HepG2 (cell line): ENCODE measurements at regions of chr1 and their contacts with region 1.

Region 1: GRCh38 chr1:113389953-113390834 is at the start of gene MAGI3:
- DNase-seq: peak; percentile 96
- ATAC-seq: peak; percentile 90
- H3K4me3 ChIP-seq: peak within 1 kb of the TSS; percentile 76 to 89 (median 77)
- H3K27ac ChIP-seq: peak within 1 kb of the TSS; percentile 86
- H3K4me1 ChIP-seq: peaks cover 38% of the 10 kb centered on the region
- H3K27me3 ChIP-seq: no peaks in the 10 kb centered on the region; a peak in 1 of 5 replicates
- CTCF ChIP-seq: peak; percentile 29; the same call in 1 of the 2 replicates
- EP300 ChIP-seq: no peak
- POLR2A ChIP-seq: peak; percentile 85 to 92
- RAD21 ChIP-seq: peak; percentile 42
- total RNA-seq, gene MAGI3: 11.3 and 11.8 TPM in 2 replicates

Region 2: GRCh38 chr1:113140588-113141446 is 249.4 kb before region 1 on chr1:
- CTCF ChIA-PET with region 1: no interaction called
- POLR2A ChIA-PET with region 1: interaction called, 4 read pairs
- in situ Hi-C with region 1: loop called (anchors 10 kb)
- intact Hi-C with region 1: loop called (anchors 2 kb)
- DNase-seq: peak; percentile 68
- ATAC-seq: peak; percentile 94
- H3K4me3 ChIP-seq: peak overlapping the region; percentile 55 to 78 (median 56)
- H3K27ac ChIP-seq: peak overlapping the region; percentile 16
- H3K4me1 ChIP-seq: peaks cover 19% of the 10 kb centered on the region
- H3K27me3 ChIP-seq: no peaks in the 10 kb centered on the region
- CTCF ChIP-seq: peak; percentile 93
- EP300 ChIP-seq: no peak
- POLR2A ChIP-seq: no peak
- RAD21 ChIP-seq: peak; percentile 91

Region 3: GRCh38 chr1:113146242-113147072 is 243.7 kb before region 1 on chr1:
- CTCF ChIA-PET with region 1: no interaction called
- POLR2A ChIA-PET with region 1: interaction called, 4 read pairs
- in situ Hi-C with region 1: loop called (anchors 10 kb)
- intact Hi-C with region 1: loop called (anchors 2 kb)
- DNase-seq: peak; percentile 87
- ATAC-seq: peak; percentile 87
- H3K4me3 ChIP-seq: peak overlapping the region; percentile 33 to 64 (median 44)
- H3K27ac ChIP-seq: peak overlapping the region; percentile 81
- H3K4me1 ChIP-seq: peaks cover 37% of the 10 kb centered on the region
- H3K27me3 ChIP-seq: no peaks in the 10 kb centered on the region
- CTCF ChIP-seq: no peak
- EP300 ChIP-seq: peak in 1 of 2 experiments; percentile 64; a peak in 1 of 4 replicates
- POLR2A ChIP-seq: peak in 1 of 2 experiments; percentile 41; a peak in 1 of 4 replicates
- RAD21 ChIP-seq: no peak

Region 4: GRCh38 chr1:113291777-113292602 is 98.2 kb before region 1 on chr1:
- CTCF ChIA-PET with region 1: no interaction called
- POLR2A ChIA-PET with region 1: no interaction called
- in situ Hi-C with region 1: no loop called
- intact Hi-C with region 1: loop called (anchors 1 kb)
- DNase-seq: peak; percentile 7
- ATAC-seq: no peak; the same call in 2 of the 3 replicates
- H3K4me3 ChIP-seq: no peak overlapping the region
- H3K27ac ChIP-seq: no peak overlapping the region
- H3K4me1 ChIP-seq: peaks cover 16% of the 10 kb centered on the region
- H3K27me3 ChIP-seq: 0 out of 5 replicates have a peak, but pooled peaks cover 0 to 3% of the 10 kb centered on the region in 2 experiments
- CTCF ChIP-seq: no peak
- EP300 ChIP-seq: no peak
- POLR2A ChIP-seq: no peak
- RAD21 ChIP-seq: no peak